ENCODE measurements at regions of chr7 and their contacts with region 1.

Region 1: GRCh38 chr7:149067876-149068275 is 22.6 kb downstream of the ZNF786 start:
- DNase-seq: no peak
- ATAC-seq: no peak
- H3K4me3 ChIP-seq: no peak overlapping the region
- H3K27ac ChIP-seq: no peak overlapping the region
- H3K4me1 ChIP-seq: no peaks in the 10 kb centered on the region
- H3K27me3 ChIP-seq: no peaks in the 10 kb centered on the region

Region 2: GRCh38 chr7:149005241-149006050 is 62.4 kb before region 1 on chr7:
- intact Hi-C with region 1: loop called (anchors 2 to 5 kb)
- DNase-seq: peak; percentile 90 to 96
- ATAC-seq: peak; percentile 88
- H3K4me3 ChIP-seq: no peak overlapping the region
- H3K27ac ChIP-seq: no peak overlapping the region
- H3K4me1 ChIP-seq: no peaks in the 10 kb centered on the region
- H3K27me3 ChIP-seq: no peaks in the 10 kb centered on the region

Measured in aorta (tissue), 5 donors.